ENCODE measurements at regions of chr1 and their contacts with region 1.

Region 1: DNA sequence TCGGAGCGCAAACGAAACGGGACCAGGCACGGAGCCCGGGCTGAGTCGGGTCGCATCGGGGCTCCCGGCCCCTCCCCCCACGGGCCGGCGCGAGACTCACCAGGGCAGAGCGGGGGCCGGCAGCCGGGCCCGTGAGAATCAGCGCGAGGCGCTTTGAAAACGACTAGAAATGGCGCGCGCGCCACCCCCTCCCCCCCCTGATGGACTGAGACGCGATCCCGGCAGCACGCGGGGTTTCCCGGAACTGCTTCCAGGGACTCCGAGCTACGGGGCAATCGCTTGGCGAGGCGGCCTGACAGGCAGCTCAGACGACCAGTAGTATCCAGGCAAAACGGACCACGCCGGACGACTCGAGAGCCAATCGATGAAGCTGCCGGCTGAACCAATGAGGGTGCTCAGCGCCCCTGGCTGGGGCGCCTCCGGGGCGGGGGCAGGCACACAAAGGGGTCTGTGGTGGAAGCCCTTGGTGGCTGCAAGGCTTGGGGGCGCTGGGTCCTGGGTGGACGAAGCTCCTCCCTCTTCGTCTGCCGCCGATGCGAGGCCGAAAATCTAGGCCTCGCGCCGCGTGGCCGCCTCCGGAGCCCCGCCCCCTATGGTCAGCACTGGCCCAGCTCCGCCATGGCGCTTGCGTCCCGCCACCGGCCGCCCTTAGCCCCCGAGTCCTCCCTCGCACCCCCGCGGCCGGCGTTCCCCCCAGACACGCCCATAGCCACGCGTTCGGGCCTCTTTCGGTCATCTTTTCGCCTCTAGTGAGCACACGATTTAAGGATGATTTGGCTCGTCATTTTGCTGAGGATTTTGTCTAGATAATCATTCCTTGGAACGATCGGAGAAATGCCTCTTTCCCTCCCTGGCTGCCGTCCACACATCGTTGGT is at the start of gene HNRNPR:
- DNase-seq: peak; percentile 99
- H3K4me3 Mint-ChIP-seq: peak within 1 kb of the TSS; percentile 91
- H3K27ac Mint-ChIP-seq: peak within 1 kb of the TSS; percentile 98
- H3K4me1 Mint-ChIP-seq: peaks cover 42% of the 10 kb centered on the region
- H3K27me3 Mint-ChIP-seq: no peaks in the 10 kb centered on the region
- total RNA-seq, gene HNRNPR: 216 to 221 TPM

Region 2: GRCh38 chr1:23322770-23323169 is 21.6 kb before region 1 on chr1:
- CTCF ChIA-PET with region 1: no interaction called
- POLR2A ChIA-PET with region 1: no interaction called
- DNase-seq: no peak
- H3K4me3 Mint-ChIP-seq: no peak overlapping the region
- H3K27ac Mint-ChIP-seq: no peak overlapping the region
- H3K4me1 Mint-ChIP-seq: peaks cover 18% of the 10 kb centered on the region
- H3K27me3 Mint-ChIP-seq: no peaks in the 10 kb centered on the region

Region 3: DNA sequence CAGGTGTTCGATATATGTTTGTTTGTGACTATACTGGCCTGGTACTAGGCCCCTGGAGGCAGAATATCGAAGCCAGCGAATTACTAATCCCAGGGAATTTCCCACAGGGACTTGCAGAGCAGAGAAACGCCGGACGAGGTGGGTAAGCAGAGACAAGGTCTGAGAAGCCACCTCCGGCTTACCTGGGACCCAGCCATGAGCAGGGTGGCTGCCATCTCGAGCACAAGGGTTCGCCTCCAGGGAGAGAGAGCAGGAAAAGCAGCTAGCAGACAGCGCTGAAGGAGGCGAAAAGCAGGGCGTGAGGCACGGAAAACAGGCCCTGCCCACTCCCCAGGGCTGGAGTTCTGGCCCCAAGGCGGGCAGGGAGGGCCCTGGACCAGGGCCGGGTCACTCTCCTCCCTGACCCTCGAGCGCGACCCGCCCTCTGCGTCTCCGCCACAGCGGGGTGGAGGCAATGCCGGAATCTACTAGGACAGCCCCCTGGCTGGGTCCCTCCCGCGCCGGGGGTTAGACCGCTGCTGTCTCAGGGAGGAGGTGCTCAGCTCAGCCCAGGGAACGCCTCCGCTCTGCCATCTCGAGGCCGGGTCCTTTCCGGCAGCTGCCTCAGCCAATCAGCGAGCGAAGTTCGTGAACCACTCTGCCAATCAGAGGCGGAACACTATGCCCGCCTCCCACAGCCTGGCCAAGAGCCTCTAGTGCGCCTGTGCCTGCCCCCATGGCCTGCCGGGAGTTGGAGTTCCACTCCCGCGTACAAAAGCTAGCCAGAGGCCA is 23.6 kb after region 1 on chr1:
- CTCF ChIA-PET with region 1: interaction called, 5 read pairs
- POLR2A ChIA-PET with region 1: interaction called, 17 read pairs
- DNase-seq: peak; percentile 99
- H3K4me3 Mint-ChIP-seq: peak overlapping the region; percentile 95
- H3K27ac Mint-ChIP-seq: peak overlapping the region; percentile 99
- H3K4me1 Mint-ChIP-seq: peaks cover 36% of the 10 kb centered on the region
- H3K27me3 Mint-ChIP-seq: no peaks in the 10 kb centered on the region